CD4-positive, alpha-beta T cell (primary cell): ENCODE measurements at regions of chr20 and their contacts with region 1.

Region 1: DNA sequence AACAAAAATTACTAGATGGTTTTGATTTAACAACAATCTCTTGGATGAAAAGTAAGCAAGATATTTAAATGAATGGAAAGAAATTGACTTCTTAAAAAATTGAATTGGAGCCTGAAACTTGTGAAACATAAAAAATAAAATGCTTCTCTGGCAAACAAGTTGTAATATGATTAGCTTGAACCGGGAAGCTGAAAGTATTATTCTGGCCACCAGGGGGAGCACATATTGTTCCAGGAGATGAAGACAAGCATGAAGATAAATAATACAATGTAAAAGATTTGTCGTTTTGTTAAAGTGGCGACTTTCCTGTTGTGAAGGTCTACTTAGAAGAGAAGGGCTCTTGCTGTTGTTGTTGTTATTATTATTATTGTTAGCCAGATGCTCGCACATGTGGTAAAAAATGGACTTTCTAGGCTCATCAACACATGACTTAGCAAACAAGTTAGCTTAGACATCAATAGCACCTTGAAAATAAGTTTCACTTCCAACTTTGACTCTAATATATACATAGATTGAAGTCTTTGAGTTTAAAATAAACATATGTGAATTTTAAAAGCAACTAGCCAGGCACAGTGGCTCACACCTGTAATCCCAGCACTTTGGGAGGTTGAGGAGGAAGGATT is 14.2 kb downstream of the PAX1 start:
- DNase-seq: peak in 7 of 14 experiments; percentile 4 to 43 (median 21)
- ATAC-seq: no peak
- H3K4me3 ChIP-seq: no peak overlapping the region
- H3K4me3 Mint-ChIP-seq: no peak overlapping the region
- H3K27ac ChIP-seq: no peak overlapping the region
- H3K27ac Mint-ChIP-seq: no peak overlapping the region
- H3K4me1 ChIP-seq: no peaks in the 10 kb centered on the region
- H3K4me1 Mint-ChIP-seq: no peaks in the 10 kb centered on the region
- H3K27me3 ChIP-seq: peaks cover 27 to 41% of the 10 kb centered on the region in 2 experiments
- H3K27me3 Mint-ChIP-seq: peaks cover 51% of the 10 kb centered on the region
- CTCF ChIP-seq: peak; percentile 91

Region 2: GRCh38 chr20:21826976-21827375 is 107.3 kb after region 1 on chr20:
- CTCF ChIA-PET with region 1: no interaction called
- POLR2A ChIA-PET with region 1: no interaction called
- intact Hi-C with region 1: no loop called
- DNase-seq: no peak
- ATAC-seq: no peak
- H3K4me3 ChIP-seq: no peak overlapping the region
- H3K4me3 Mint-ChIP-seq: no peak overlapping the region
- H3K27ac ChIP-seq: no peak overlapping the region
- H3K27ac Mint-ChIP-seq: no peak overlapping the region
- H3K4me1 ChIP-seq: no peaks in the 10 kb centered on the region
- H3K4me1 Mint-ChIP-seq: no peaks in the 10 kb centered on the region
- H3K27me3 ChIP-seq: no peaks in the 10 kb centered on the region
- H3K27me3 Mint-ChIP-seq: peaks cover 5% of the 10 kb centered on the region
- CTCF ChIP-seq: no peak

Region 3: DNA sequence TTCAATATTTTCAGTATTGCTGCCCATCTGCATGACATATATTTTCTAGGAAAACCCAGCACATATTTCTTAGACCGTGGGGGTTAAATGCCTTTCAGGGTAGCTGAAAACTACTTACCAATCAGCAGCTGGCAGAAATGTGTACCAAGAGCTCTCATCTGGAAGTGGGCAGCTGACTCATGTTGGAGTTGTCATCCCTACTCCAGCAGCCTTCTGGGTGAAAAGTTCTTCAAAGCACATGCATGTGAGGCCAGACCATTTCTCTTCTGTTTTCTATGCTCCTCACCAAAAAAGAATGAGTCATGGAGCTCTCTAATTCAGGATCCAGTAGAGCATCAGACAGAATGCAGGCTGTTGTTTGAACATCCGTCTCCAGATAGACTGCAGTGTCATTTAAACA is 121.3 kb after region 1 on chr20:
- CTCF ChIA-PET with region 1: no interaction called
- POLR2A ChIA-PET with region 1: no interaction called
- intact Hi-C with region 1: no loop called
- DNase-seq: no peak
- ATAC-seq: no peak
- H3K4me3 ChIP-seq: no peak overlapping the region
- H3K4me3 Mint-ChIP-seq: no peak overlapping the region
- H3K27ac ChIP-seq: no peak overlapping the region
- H3K27ac Mint-ChIP-seq: no peak overlapping the region
- H3K4me1 ChIP-seq: no peaks in the 10 kb centered on the region
- H3K4me1 Mint-ChIP-seq: no peaks in the 10 kb centered on the region
- H3K27me3 ChIP-seq: no peaks in the 10 kb centered on the region
- H3K27me3 Mint-ChIP-seq: no peaks in the 10 kb centered on the region
- CTCF ChIP-seq: no peak

Region 4: DNA sequence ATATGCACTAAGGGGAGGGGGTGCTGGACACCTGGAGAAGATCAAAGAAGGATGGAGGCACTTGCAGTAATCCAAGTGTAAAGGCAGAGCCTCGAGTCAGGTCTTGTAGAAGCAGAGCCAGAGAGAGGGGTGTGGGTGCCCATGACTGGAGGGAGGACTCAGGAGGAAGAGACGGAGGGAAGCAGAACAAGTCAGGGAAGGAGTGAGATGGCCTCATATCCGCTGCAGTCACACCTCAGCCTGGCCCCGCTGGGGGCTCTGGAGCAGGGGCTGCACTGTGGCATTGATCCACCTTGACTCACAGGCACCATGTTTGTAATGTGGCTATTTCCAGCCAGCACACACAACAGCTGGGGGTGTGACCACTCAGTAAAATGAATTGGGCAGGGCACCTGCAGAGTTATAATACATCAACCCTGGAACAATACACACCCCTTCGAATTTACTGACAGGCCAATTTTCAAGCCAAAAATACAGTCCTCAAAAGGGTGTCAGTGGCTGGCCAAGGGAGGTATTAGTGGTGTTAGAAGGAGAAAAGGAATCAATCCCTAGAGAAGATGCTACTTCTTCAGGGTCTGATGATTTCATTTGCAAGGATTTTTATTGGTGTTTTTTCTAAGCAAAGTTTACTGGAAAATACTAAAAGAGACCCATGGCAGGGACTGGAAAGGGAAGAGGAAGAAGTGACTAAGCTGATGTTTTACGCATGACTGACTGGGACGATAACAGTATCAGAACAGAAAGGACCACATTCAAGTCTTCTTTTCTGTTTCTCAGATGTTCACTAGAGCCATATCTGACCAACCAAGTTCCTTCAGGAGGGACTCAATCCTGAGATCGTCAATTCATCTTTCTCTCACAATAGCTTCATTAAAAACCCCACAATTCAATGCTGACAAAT is 1612.0 kb after region 1 on chr20:
- CTCF ChIA-PET with region 1: no interaction called
- POLR2A ChIA-PET with region 1: no interaction called
- intact Hi-C with region 1: loop called in 1 of 2 experiments (anchors 10 kb)
- DNase-seq: no peak
- ATAC-seq: no peak
- H3K4me3 ChIP-seq: no peak overlapping the region
- H3K4me3 Mint-ChIP-seq: no peak overlapping the region
- H3K27ac ChIP-seq: no peak overlapping the region
- H3K27ac Mint-ChIP-seq: no peak overlapping the region
- H3K4me1 ChIP-seq: peaks cover 3% of the 10 kb centered on the region
- H3K4me1 Mint-ChIP-seq: no peaks in the 10 kb centered on the region
- H3K27me3 ChIP-seq: no peaks in the 10 kb centered on the region
- H3K27me3 Mint-ChIP-seq: no peaks in the 10 kb centered on the region
- CTCF ChIP-seq: no peak